ENCODE measurements at regions of chr20 and their contacts with region 1.

Region 1: DNA sequence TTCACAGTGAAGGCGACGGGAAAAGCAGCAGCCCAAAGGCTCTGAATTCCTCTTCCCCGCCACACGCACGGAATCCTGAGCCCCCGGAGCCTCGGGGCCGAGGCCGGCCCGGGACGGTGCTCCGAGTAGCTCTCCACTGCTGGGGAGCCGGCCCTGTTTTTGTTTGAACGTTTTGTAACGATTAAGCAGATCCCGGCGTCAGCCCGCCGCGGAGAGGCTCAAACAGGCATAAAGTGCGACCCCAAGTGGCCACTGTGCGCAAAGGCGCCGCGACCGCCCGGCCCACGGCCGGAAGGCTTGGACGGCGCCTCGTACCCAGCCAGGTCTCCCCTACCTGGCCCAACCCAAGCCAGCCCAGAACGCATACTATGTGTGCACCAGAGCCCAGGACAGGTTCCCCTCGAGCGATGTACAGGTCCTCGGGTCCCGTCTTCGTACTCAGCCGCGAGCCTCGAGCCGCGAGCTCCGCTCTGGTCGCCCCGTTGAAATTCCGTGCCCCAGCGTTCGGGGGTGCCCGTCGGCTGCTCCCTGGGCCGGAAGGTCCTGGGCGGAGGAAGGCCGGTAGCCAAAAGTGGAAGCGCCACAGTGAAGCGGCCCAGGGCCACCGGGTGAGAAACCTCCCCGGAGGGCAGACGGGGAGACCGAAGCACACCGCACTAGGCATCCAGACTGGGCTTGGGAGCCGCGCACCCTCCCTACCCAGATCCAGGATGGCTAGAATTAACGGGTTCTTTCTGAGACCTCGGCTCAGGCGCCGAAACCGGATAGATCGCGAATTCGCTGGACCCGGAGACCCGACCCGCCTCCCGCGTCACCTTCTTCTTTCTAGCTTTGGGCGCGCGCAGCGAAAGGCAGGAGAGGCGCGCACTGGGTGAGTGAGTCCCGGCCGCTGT is 1.2 kb upstream of the MAFB start:
- DNase-seq: peak; percentile 81
- H3K4me3 ChIP-seq: peak overlapping the region; percentile 16 to 38 (median 24)
- H3K27ac ChIP-seq: peak overlapping the region; percentile 9
- H3K4me1 ChIP-seq: peaks cover 9% of the 10 kb centered on the region
- H3K27me3 ChIP-seq: peaks cover 45 to 65% of the 10 kb centered on the region in 2 experiments
- CTCF ChIP-seq: peak; percentile 95
- POLR2A ChIP-seq: no peak

Region 2: GRCh38 chr20:39574061-39574460 is 1116.1 kb before region 1 on chr20:
- CTCF ChIA-PET with region 1: no interaction called
- POLR2A ChIA-PET with region 1: no interaction called
- dilution Hi-C with region 1: no loop called
- intact Hi-C with region 1: loop called (anchors 10 kb)
- DNase-seq: peak; percentile 66
- H3K4me3 ChIP-seq: peak overlapping the region in 1 of 3 experiments; percentile 21
- H3K27ac ChIP-seq: peak overlapping the region; percentile 28
- H3K4me1 ChIP-seq: peaks cover 26% of the 10 kb centered on the region
- H3K27me3 ChIP-seq: no peaks in the 10 kb centered on the region
- CTCF ChIP-seq: no peak
- POLR2A ChIP-seq: no peak

Region 3: DNA sequence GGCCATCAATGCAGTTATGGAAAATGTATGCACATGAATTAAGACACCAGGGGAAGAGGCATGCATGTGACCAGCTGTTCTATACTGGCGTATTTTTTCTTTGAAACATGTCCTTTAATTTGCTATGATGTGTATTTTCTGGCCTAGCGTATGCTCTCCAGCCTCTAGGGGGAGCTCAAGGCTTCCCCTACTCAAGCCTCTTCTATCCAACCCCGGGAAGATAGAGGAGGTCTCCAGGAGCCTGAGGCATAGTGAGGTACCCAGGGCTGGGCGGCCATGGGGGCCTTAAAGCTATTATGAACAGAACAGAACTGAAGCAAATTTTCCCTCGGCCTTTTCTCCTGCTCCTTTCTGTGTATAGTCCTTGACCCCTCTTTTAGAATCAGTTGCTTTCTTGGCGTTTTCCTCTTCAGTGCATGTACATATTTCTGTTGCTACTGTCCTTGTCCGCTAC is 530.1 kb before region 1 on chr20:
- CTCF ChIA-PET with region 1: interaction called, 95 read pairs
- POLR2A ChIA-PET with region 1: interaction called, 8 read pairs
- dilution Hi-C with region 1: no loop called
- intact Hi-C with region 1: loop called (anchors 1 kb)
- DNase-seq: peak; percentile 75
- H3K4me3 ChIP-seq: no peak overlapping the region
- H3K27ac ChIP-seq: no peak overlapping the region
- H3K4me1 ChIP-seq: no peaks in the 10 kb centered on the region
- H3K27me3 ChIP-seq: no peaks in the 10 kb centered on the region
- CTCF ChIP-seq: peak; percentile 83 to 89
- POLR2A ChIP-seq: no peak

Region 4: GRCh38 chr20:40646361-40646760 is 43.8 kb before region 1 on chr20:
- CTCF ChIA-PET with region 1: interaction called, 3 read pairs
- POLR2A ChIA-PET with region 1: interaction called, 8 read pairs
- dilution Hi-C with region 1: no loop called
- intact Hi-C with region 1: loop called (anchors 1 kb)
- DNase-seq: peak; percentile 64
- H3K4me3 ChIP-seq: no peak overlapping the region
- H3K27ac ChIP-seq: no peak overlapping the region
- H3K4me1 ChIP-seq: peaks cover 29% of the 10 kb centered on the region
- H3K27me3 ChIP-seq: no peaks in the 10 kb centered on the region
- CTCF ChIP-seq: no peak
- POLR2A ChIP-seq: no peak